Left colon (tissue), 2 donors: ENCODE measurements at regions of chr12 and their contacts with region 1.

Region 1: DNA sequence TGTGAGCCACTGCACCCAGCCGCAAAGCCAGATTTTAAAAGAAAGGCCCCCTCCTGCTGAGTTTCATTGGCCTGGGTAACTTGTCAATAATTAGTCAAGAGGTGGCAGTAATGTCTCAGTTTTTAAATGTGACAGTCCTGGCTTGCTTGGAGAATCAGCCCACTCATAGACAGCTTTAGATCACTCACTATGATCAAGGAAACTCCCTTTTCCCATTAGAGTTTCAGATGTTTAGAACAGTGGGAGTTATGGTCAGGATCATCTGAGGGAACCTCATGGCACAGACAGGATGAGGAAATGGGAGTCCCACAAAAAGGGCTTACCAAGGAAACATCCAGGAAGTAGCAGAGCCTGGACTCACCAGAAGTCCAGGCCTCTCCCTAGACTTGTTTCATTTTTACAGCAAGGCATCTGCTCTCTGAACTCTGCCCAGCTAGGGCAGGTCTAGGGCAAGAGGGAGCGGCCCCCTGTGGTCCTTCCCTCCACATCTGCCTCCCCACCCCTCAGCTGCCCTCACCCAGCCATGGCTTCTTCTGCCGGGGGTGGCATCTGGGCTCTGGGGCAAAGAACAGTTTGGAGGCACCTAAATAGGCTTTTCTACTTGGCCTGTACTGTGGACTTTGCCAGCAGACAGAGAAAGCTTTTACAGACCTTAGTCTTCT is 11.2 kb downstream of the BCL2L14 start:
- DNase-seq: peak; percentile 65 to 86
- ATAC-seq: peak; percentile 94

Region 2: DNA sequence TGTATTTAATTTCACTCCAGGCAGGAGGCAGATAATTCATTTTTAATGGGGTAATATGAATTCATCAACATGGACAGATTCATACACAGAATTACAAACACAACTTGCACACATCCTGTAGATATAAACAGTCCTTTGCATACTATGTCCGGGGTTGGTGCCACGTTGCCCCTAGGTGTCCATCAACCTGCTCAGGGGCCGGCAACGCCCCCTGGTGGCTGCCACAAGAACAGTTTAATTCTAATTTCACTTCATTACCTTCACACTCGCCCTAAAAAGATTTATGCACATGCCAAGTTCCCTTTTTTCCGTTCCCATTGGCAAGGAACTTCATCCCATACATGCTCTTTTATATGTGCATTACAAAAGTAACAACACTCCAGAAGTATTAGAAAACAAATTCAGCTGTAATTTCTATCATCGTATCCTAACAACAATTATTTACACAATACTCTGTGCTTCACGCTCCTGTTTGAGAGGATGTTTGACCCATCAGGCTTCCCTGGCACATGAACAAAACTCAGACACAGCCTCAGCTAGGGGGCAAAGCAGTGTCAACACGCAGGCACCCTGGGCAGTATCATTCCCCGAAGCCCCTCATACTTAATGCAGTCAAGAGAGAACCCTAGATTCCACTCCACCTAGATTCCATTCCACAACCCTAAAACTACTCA is 252.5 kb after region 1 on chr12:
- intact Hi-C with region 1: loop called in 1 of 2 experiments (anchors 10 kb)
- DNase-seq: peak; percentile 55 to 65
- ATAC-seq: peak; percentile 63

Region 3: GRCh38 chr12:12611512-12612306 is 529.7 kb after region 1 on chr12 and contains the start of gene CREBL2:
- intact Hi-C with region 1: no loop called
- DNase-seq: peak; percentile 93 to 95
- ATAC-seq: peak; percentile 94
- total RNA-seq, gene CREBL2: 25.6 to 28.1 TPM